ENCODE measurements at regions of chr4 and their contacts with region 1.

Region 1: DNA sequence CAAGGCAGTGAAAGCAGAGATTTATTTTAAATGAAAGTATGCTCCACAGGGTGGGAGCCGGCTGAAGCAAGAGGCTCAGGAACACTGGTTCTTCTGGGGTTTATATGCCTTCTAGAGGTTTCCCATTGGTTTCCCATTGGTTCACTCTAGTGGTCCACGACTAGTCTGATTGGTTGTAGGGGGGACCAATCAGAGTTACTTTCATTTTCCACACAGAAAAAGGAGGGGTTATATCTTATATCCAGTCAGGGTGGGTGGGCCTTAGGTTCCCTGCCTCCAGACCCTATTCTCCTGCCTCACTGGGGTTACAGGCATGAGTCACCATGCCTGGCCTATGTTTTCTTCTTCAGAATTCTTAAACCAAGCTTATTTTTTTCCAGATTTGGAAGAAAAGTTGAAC is 101.6 kb downstream of the KLHL8 start:
- DNase-seq: no peak
- ATAC-seq: peak; percentile 73
- H3K4me3 ChIP-seq: no peak overlapping the region
- H3K27ac ChIP-seq: no peak overlapping the region
- H3K4me1 ChIP-seq: no peaks in the 10 kb centered on the region; the same call in 1 of the 2 replicates
- H3K27me3 ChIP-seq: no peaks in the 10 kb centered on the region
- CTCF ChIP-seq: no peak
- EP300 ChIP-seq: no peak
- POLR2A ChIP-seq: no peak
- RAD21 ChIP-seq: no peak

Region 2: GRCh38 chr4:86416081-86416480 is 702.7 kb before region 1 on chr4:
- CTCF ChIA-PET with region 1: no interaction called
- POLR2A ChIA-PET with region 1: no interaction called
- RAD21 ChIA-PET with region 1: no interaction called
- SMC1A ChIA-PET with region 1: no interaction called
- in situ Hi-C with region 1: no loop called
- intact Hi-C with region 1: no loop called
- DNase-seq: no peak
- ATAC-seq: no peak
- H3K4me3 ChIP-seq: no peak overlapping the region
- H3K27ac ChIP-seq: no peak overlapping the region
- H3K4me1 ChIP-seq: no peaks in the 10 kb centered on the region
- H3K27me3 ChIP-seq: no peaks in the 10 kb centered on the region
- CTCF ChIP-seq: no peak
- EP300 ChIP-seq: no peak
- POLR2A ChIP-seq: no peak
- RAD21 ChIP-seq: no peak

Region 3: DNA sequence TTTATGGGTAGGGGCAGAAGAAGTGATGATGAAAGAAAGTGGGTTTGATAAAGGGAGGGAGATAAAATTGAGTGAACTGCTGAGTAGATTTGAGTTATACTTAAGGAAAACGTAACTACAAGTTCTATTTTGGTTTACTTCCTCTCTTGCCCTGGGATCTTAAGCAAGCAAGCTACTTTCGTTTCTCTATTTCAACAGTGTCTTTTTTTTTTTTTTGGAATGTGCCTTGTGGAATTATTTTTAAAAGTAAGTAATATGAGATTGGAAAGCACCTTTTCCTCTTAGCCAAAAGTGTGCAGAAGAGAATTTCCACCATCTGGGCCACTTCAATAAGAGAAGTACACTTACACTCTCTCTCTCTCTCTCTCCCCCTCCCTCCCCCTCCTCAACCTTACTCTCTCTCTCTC is 210.6 kb before region 1 on chr4:
- CTCF ChIA-PET with region 1: no interaction called
- POLR2A ChIA-PET with region 1: interaction called, 10 read pairs
- RAD21 ChIA-PET with region 1: no interaction called
- SMC1A ChIA-PET with region 1: interaction called, 3 read pairs
- in situ Hi-C with region 1: no loop called
- intact Hi-C with region 1: no loop called
- DNase-seq: no peak
- ATAC-seq: peak; percentile 53
- H3K4me3 ChIP-seq: no peak overlapping the region
- H3K27ac ChIP-seq: peak overlapping the region; percentile 8; the same call in 1 of the 2 replicates
- H3K4me1 ChIP-seq: peaks cover 18% of the 10 kb centered on the region
- H3K27me3 ChIP-seq: no peaks in the 10 kb centered on the region
- CTCF ChIP-seq: no peak
- EP300 ChIP-seq: no peak
- POLR2A ChIP-seq: no peak
- RAD21 ChIP-seq: no peak

Region 4: GRCh38 chr4:87103691-87104187 is 15.1 kb before region 1 on chr4:
- CTCF ChIA-PET with region 1: no interaction called
- POLR2A ChIA-PET with region 1: interaction called, 5 read pairs
- RAD21 ChIA-PET with region 1: interaction called, 3 read pairs
- SMC1A ChIA-PET with region 1: interaction called, 11 read pairs
- in situ Hi-C with region 1: no loop called
- intact Hi-C with region 1: no loop called
- DNase-seq: no peak
- ATAC-seq: no peak
- H3K4me3 ChIP-seq: no peak overlapping the region
- H3K27ac ChIP-seq: no peak overlapping the region
- H3K4me1 ChIP-seq: no peaks in the 10 kb centered on the region
- H3K27me3 ChIP-seq: no peaks in the 10 kb centered on the region
- CTCF ChIP-seq: no peak
- EP300 ChIP-seq: no peak
- POLR2A ChIP-seq: no peak
- RAD21 ChIP-seq: no peak